PC-3 (cell line): ENCODE measurements at regions of chr2 and their contacts with region 1.

Region 1: GRCh38 chr2:25127646-25128045 is 40.7 kb downstream of the POMC start:
- DNase-seq: no peak
- ATAC-seq: no peak
- H3K4me3 ChIP-seq: no peak overlapping the region
- H3K27ac ChIP-seq: no peak overlapping the region
- H3K4me1 ChIP-seq: peaks cover 2% of the 10 kb centered on the region; the same call in 1 of the 2 replicates
- H3K27me3 ChIP-seq: no peaks in the 10 kb centered on the region
- CTCF ChIP-seq: no peak

Region 2: GRCh38 chr2:24754985-24755705 is 372.5 kb before region 1 on chr2:
- CTCF ChIA-PET with region 1: no interaction called
- POLR2A ChIA-PET with region 1: no interaction called
- intact Hi-C with region 1: no loop called
- DNase-seq: no peak
- ATAC-seq: no peak
- H3K4me3 ChIP-seq: no peak overlapping the region
- H3K27ac ChIP-seq: no peak overlapping the region
- H3K4me1 ChIP-seq: no peaks in the 10 kb centered on the region
- H3K27me3 ChIP-seq: no peaks in the 10 kb centered on the region
- CTCF ChIP-seq: no peak

Region 3: DNA sequence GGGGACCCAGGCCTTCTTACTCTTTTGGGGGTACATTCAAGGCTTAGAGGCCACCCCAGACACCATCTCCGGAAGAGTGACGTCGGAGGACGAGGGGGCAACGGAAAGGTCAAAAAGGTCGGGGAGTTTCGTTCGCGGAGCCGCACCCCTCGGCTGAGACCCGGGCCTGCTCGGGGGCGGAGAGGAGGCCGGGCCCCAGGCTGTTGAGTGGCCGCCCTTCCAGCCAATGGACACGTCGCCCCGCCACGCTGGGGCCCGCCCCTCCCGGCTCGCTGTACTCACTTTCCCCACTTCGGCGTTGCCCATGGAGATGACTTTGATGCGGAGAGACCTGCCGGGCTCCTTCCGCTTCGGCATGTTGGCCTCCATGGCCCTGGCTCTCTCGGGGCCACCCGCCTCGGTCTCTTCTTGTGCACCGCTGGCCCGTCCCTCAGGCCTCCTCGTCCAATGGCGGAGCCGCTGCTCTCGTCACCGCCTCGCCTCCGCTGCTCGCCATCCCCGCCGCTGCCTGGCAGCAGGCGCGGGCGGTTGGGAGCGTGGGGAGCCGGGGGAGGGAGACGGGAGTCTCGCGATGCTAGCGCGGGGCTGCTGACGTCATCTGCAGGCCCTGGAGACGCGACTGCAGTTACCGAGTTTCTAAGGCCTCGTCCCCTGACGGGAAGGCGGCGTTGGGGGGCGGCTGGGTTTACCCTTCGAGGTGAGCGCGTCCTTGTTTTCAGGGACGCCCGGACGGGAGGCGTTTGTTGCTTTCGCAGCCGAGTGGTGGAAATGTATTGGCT is 155.9 kb before region 1 on chr2 and contains the start of gene DNAJC27:
- CTCF ChIA-PET with region 1: interaction called, 26 read pairs
- POLR2A ChIA-PET with region 1: no interaction called
- intact Hi-C with region 1: loop called (anchors 1 kb)
- DNase-seq: peak; percentile 98
- ATAC-seq: peak; percentile 92
- H3K4me3 ChIP-seq: peak within 1 kb of the TSS; percentile 97
- H3K27ac ChIP-seq: peak within 1 kb of the TSS; percentile 82
- H3K4me1 ChIP-seq: peaks cover 14% of the 10 kb centered on the region
- H3K27me3 ChIP-seq: no peaks in the 10 kb centered on the region
- CTCF ChIP-seq: no peak
- total RNA-seq, gene DNAJC27: 2.0 and 3.1 TPM in 2 replicates

Region 4: DNA sequence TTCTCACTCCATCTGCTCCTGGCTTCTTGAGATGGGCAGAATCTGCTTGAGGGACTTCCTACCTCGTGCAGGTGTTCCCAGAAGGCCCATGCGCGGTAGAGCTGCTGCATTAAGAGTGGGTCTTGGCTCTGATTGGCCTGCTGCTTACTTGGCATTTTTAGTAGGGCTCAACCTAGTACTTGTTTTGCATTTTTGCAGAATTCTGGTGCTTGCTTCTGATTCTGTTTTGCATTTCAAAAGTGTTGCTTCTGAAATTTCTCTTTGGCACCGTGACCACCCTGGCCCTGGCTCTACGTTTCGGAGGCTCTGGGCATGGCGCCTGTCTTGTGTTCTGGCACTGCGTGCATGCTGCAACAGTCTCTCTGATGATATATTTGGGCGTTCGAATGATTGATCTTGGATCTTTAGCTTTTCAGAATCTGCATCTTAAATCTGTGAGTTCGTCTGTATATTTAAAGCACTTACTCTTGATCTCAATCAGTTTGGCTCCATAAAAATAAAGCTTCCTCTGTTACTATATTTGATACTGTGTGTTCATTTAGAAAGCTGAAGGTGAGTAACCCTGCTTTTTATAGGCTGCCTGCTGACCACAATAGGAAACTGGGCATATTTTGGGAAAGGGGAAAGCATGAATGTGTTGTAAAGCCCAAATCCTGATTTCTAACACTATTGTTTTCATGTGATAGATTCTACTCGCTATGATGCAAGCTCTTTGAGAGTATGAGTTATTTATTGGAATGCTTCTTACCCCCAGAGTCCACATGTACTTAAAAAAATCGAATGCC is 63.6 kb before region 1 on chr2:
- CTCF ChIA-PET with region 1: no interaction called
- POLR2A ChIA-PET with region 1: no interaction called
- intact Hi-C with region 1: no loop called
- DNase-seq: peak; percentile 29
- ATAC-seq: peak; percentile 88
- H3K4me3 ChIP-seq: no peak overlapping the region
- H3K27ac ChIP-seq: no peak overlapping the region
- H3K4me1 ChIP-seq: peaks cover 9% of the 10 kb centered on the region
- H3K27me3 ChIP-seq: no peaks in the 10 kb centered on the region
- CTCF ChIP-seq: no peak

Region 5: GRCh38 chr2:25078171-25079049 is 49.2 kb before region 1 on chr2:
- CTCF ChIA-PET with region 1: interaction called, 12 read pairs
- POLR2A ChIA-PET with region 1: no interaction called
- intact Hi-C with region 1: no loop called
- DNase-seq: peak; percentile 93
- ATAC-seq: peak; percentile 95
- H3K4me3 ChIP-seq: peak overlapping the region; percentile 46
- H3K27ac ChIP-seq: peak overlapping the region; percentile 62
- H3K4me1 ChIP-seq: peaks cover 16% of the 10 kb centered on the region
- H3K27me3 ChIP-seq: no peaks in the 10 kb centered on the region
- CTCF ChIP-seq: no peak

Region 6: DNA sequence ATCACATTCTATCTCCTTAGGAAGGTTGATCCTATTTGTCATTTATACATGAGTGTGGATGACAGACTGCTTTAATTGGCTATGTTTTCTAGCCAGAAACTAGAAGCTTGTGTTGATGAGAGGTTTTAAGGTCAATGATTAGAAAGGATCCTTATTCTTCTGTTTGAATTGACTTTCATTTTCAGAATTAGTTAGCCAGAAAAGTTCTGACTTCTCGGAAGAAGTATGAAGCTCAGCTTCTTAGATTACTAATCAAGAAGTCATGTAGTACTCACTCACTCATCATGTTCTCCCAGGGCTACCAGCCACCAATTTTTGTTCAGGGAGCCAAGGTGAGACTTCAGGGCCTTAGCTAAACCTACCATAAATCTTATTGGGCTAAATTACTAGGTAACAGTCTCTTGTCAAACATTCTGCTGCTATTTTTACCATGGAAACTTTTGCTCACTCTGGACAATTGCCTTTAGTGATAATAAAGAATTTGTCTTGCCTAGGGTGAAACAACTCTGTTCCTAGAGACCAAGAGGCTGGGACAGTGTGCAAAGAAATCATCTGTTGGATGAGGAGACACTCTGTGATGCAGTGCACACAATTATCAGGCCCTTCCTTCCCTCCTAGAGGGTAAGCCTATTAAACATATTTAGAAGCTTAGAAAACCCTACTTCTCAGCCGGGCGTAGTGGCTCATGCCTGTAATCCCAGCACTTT is 325.7 kb after region 1 on chr2:
- CTCF ChIA-PET with region 1: no interaction called
- POLR2A ChIA-PET with region 1: no interaction called
- intact Hi-C with region 1: no loop called
- DNase-seq: no peak
- ATAC-seq: no peak
- H3K4me3 ChIP-seq: no peak overlapping the region
- H3K27ac ChIP-seq: no peak overlapping the region
- H3K4me1 ChIP-seq: no peaks in the 10 kb centered on the region
- H3K27me3 ChIP-seq: no peaks in the 10 kb centered on the region
- CTCF ChIP-seq: no peak